Aorta (tissue), 5 donors: ENCODE measurements at regions of chr6 and their contacts with region 1.

Region 1: DNA sequence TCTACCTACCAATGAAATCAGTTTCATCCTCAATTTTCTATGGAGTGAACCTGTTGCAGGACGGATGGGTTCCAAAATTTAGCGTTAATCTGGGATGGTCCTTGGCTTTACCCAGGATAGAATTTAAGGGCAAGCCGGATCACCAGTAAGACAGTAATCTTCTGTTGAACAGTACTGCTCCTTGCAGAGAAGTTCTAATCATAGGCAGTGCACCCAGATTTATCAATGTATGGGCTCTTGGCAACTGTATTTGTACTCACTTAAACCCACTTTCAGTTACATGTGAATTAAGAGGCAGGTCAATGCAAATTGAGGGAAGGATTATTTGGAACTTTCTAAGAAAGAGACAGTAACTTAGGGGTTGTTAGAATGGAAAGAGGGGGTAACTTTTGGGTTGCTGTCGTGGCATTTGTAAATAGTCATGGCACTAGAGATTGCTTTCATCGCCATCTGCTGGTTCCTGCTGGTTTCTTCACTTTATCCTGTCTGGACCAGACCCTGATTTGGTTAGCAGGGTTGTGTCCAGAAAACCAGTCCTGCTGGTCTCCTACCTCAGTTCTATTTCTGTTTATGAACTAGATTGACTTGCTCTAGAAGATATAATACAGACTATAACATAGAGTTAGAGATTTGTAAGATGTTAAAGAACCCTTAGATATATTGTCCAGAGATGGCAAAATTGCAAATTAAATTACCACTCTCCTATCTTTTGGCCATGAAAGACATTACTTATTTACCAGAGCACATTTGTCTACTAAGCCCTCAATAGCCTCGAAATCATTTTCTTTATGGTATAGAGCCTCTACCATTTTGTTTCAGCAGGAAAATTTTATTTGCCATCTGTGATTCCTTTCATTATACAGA is 646.3 kb downstream of the UTRN start:
- DNase-seq: no peak
- ATAC-seq: no peak
- H3K4me3 ChIP-seq: no peak overlapping the region
- H3K27ac ChIP-seq: no peak overlapping the region
- H3K4me1 ChIP-seq: no peaks in the 10 kb centered on the region
- H3K27me3 ChIP-seq: no peaks in the 10 kb centered on the region

Region 2: GRCh38 chr6:144582939-144583613 is 348.3 kb before region 1 on chr6:
- intact Hi-C with region 1: loop called (anchors 5 to 10 kb)
- DNase-seq: peak in 1 of 2 donors; percentile 53
- ATAC-seq: peak; percentile 69
- H3K4me3 ChIP-seq: no peak overlapping the region
- H3K27ac ChIP-seq: no peak overlapping the region
- H3K4me1 ChIP-seq: peaks cover 0 to 3% of the 10 kb centered on the region in 2 donors
- H3K27me3 ChIP-seq: no peaks in the 10 kb centered on the region

Region 3: GRCh38 chr6:144689503-144690075 is 241.8 kb before region 1 on chr6:
- intact Hi-C with region 1: no loop called
- DNase-seq: no peak
- ATAC-seq: no peak
- H3K4me3 ChIP-seq: no peak overlapping the region
- H3K27ac ChIP-seq: no peak overlapping the region
- H3K4me1 ChIP-seq: peaks cover 0 to 2% of the 10 kb centered on the region in 2 donors
- H3K27me3 ChIP-seq: no peaks in the 10 kb centered on the region